Mammary epithelial cell (primary cell): ENCODE measurements at regions of chr17 and their contacts with region 1.

Region 1: GRCh38 chr17:8798846-8799569 is at the start of gene MFSD6L:
- DNase-seq: peak; percentile 17
- H3K4me3 ChIP-seq: no peak within 1 kb of the TSS
- H3K27ac ChIP-seq: no peak within 1 kb of the TSS
- H3K4me1 ChIP-seq: peaks cover 10% of the 10 kb centered on the region
- H3K27me3 ChIP-seq: peaks cover 4% of the 10 kb centered on the region
- CTCF ChIP-seq: peak; percentile 6 to 43
- total RNA-seq, gene MFSD6L: not detected

Region 2: GRCh38 chr17:8724451-8725124 is 74.4 kb before region 1 on chr17:
- CTCF ChIA-PET with region 1: no interaction called
- dilution Hi-C with region 1: no loop called
- in situ Hi-C with region 1: no loop called
- intact Hi-C with region 1: no loop called
- DNase-seq: no peak
- H3K4me3 ChIP-seq: no peak overlapping the region
- H3K27ac ChIP-seq: no peak overlapping the region
- H3K4me1 ChIP-seq: peaks cover 13% of the 10 kb centered on the region
- H3K27me3 ChIP-seq: no peaks in the 10 kb centered on the region
- CTCF ChIP-seq: no peak

Region 3: GRCh38 chr17:8843344-8843743 is 44.3 kb after region 1 on chr17:
- CTCF ChIA-PET with region 1: no interaction called
- dilution Hi-C with region 1: no loop called
- in situ Hi-C with region 1: no loop called
- intact Hi-C with region 1: loop called (anchors 5 kb)
- DNase-seq: no peak
- H3K4me3 ChIP-seq: no peak overlapping the region
- H3K27ac ChIP-seq: no peak overlapping the region
- H3K4me1 ChIP-seq: no peaks in the 10 kb centered on the region
- H3K27me3 ChIP-seq: no peaks in the 10 kb centered on the region
- CTCF ChIP-seq: no peak

Region 4: DNA sequence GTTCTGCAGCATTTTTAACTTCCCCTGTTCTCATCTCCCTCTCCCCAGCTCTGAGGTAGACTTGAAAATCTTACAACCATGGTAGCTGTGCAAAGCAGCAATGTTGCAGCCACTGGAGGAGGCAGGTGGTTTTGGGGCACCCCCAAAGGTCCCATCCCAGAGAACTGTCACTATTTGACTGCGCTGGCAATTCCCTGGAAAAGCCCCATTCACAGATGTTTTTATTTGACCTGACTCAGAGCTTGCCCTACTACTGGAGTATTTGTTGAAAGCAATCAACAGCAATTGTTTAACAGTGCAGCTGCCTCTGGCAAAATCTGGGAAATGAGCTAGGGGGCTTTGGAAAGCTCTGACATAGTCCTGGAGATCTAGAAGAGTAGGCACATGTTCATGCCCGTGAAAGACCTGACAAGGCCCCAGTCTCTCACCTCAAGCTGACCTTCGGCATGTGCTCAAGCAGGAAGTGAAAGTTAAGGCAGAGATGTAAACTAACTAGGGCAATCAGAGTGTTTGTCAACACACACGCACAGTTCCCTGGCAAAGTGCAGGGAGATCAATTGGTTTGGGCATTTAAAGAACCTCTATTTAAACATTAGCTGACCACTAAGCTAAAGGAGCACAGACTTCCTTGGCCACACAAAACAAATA is 186.2 kb after region 1 on chr17:
- CTCF ChIA-PET with region 1: no interaction called
- dilution Hi-C with region 1: no loop called
- in situ Hi-C with region 1: no loop called
- intact Hi-C with region 1: no loop called
- DNase-seq: no peak
- H3K4me3 ChIP-seq: no peak overlapping the region
- H3K27ac ChIP-seq: no peak overlapping the region
- H3K4me1 ChIP-seq: no peaks in the 10 kb centered on the region
- H3K27me3 ChIP-seq: no peaks in the 10 kb centered on the region
- CTCF ChIP-seq: no peak

Region 5: DNA sequence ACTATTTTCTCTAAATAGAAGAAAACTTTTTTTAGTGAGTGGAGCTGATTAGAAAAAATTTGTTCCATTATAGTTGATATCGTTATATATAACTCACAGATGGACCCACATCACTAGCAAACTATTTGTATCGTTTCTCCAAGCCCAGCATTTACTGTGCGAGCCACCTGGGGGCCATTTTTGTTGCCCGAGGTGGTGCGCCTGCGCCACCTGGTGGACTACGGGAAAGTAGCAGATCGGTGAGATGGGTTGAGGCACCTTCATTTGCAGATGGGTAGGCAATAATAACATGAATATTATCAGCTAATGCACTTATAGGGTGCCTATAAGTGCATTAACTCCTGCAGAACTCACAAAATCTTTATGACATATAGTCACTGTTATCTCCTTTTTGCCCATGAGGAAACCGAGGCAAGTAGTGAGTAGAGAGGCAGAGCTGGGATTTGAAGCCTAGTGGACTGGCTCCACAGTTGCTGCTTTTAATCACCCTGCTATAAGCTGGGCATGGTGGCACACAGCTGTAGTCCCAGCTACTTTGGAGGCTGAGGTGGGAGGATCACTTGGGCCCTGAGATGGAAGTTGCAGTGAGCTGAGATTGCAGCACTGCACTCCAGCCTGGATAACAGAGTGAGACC is 199.1 kb after region 1 on chr17:
- CTCF ChIA-PET with region 1: no interaction called
- dilution Hi-C with region 1: no loop called
- in situ Hi-C with region 1: no loop called
- intact Hi-C with region 1: loop called (anchors 5 kb)
- DNase-seq: peak; percentile 39
- H3K4me3 ChIP-seq: no peak overlapping the region
- H3K27ac ChIP-seq: no peak overlapping the region
- H3K4me1 ChIP-seq: no peaks in the 10 kb centered on the region
- H3K27me3 ChIP-seq: peaks cover 2% of the 10 kb centered on the region
- CTCF ChIP-seq: peak; percentile 95 to 97